Endothelial cell of umbilical vein (primary cell): ENCODE measurements at regions of chr14 and their contacts with region 1.

Region 1: DNA sequence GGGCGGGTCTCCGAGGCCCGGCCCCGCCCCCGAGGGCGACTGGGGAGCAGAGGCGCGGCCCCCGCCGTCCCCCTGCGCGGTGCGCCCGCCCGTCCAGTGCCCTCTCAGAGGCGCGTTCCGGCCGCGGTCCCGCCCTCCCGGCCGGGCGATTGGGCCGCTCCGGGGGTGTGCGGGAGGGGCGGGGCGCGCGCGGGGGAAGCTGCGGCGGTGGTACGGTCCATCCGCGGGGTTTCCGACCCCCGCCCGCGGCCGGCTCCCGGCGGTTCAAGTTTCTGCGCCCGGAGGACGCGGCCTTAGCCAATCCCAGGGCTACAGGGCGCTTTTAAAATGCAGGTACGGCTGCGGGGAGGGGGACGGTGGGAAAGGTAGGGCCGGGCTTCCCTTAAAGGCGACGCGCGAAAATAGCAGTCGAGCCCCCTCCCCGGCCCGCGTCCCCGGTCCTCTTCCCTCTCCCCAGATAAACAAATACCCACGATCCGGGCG is 317 bp upstream of the CCDC85C start:
- DNase-seq: peak; percentile 92
- H3K4me3 ChIP-seq: peak overlapping the region; percentile 45 to 81 (median 78)
- H3K27ac ChIP-seq: peak overlapping the region; percentile 60
- H3K4me1 ChIP-seq: peaks cover 20% of the 10 kb centered on the region
- H3K27me3 ChIP-seq: peaks cover 0 to 5% of the 10 kb centered on the region in 2 experiments
- CTCF ChIP-seq: no peak
- POLR2A ChIP-seq: peak; percentile 48

Region 2: DNA sequence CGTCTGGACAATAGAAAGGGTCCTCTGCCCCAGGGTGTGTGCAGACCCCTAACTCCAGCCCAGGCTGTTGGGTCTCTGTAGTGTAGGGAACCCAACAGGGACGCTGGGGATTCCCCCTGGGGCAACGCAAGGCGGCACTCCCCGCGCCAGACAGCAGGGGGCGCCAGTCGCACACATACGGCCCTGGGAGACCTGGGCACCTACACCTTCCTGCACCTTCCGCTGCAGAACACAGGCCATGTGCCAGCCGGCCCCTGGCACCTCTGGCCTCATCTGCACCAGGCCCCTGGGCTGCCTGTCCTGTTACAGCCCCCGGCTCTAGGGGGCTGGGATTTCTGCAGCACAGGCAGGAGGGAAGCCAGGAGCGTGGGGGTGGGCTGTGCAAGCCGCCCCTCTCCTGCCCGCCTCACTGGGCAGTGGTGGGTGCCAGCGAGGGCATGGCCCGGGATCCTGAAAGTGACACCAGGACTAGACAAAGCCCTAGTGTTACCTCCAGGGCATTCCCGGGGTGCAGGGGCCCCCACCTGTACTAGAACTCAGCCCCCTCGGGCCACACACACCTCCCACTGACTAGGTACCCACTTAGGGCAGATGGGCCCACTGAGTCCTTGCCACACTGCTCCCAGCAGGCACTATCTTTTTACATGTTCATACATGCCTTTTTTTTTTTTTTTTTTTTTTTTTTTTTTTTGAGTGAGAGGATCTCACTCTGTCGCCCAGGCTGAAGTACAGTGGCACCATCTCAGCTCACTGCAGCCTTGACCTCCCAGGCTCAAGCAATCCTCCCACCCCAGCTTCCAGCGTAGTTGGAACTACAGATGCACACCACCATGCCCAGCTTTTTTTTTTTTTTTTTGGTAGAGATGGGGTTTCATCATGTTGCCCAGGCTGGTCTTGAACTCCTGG is 85.6 kb before region 1 on chr14:
- CTCF ChIA-PET with region 1: interaction called, 24 read pairs
- POLR2A ChIA-PET with region 1: no interaction called
- dilution Hi-C with region 1: no loop called
- intact Hi-C with region 1: loop called (anchors 1 kb)
- DNase-seq: peak; percentile 55
- H3K4me3 ChIP-seq: no peak overlapping the region
- H3K27ac ChIP-seq: no peak overlapping the region
- H3K4me1 ChIP-seq: peaks cover 9% of the 10 kb centered on the region
- H3K27me3 ChIP-seq: no peaks in the 10 kb centered on the region
- CTCF ChIP-seq: peak; percentile 94 to 97
- POLR2A ChIP-seq: no peak

Region 3: DNA sequence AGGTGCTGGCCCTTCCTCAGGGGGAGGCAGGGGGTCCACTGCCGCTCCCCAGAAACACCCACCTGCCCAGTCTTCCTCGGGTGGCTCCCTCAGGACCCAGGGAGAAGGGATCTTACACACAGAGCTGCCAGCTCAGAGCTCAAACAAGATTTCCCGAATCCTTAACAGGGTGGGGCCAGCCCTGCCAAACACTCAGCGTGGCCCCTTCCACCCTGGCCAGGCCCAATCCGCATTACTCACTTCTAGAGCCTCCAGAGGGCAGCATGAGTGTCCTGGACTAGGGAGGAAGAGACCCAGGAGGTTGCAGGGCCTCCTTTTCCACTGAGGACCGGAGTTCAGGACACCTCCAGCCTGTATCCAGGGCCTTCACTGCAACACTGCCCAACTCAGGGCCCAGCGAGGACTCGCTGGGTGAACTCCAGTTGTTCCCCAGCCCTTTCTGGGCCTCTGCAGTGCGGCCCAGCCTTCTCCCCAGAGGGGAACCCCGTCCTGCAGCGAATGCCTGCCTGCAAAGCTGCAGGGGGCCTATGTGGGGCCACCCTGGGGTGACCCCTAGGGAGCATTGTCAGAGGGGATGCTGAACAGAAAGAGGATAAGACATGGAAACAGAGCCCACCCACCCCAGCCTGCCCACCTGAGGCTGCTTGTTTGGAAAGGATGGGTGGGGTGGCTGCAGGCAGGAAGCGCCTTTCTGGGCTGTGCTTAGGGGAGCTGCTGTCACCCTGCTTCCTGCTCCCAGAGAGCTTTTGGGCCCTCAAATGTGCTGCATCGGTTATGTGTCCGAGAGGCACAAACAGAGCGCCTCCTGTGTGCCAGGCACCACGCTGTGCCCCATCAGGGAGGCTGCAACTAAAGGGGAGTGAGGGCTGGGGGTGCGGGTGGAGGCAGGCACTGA is 79.3 kb before region 1 on chr14:
- CTCF ChIA-PET with region 1: interaction called, 24 read pairs
- POLR2A ChIA-PET with region 1: no interaction called
- dilution Hi-C with region 1: no loop called
- intact Hi-C with region 1: no loop called
- DNase-seq: peak; percentile 24
- H3K4me3 ChIP-seq: no peak overlapping the region
- H3K27ac ChIP-seq: no peak overlapping the region
- H3K4me1 ChIP-seq: peaks cover 15% of the 10 kb centered on the region
- H3K27me3 ChIP-seq: no peaks in the 10 kb centered on the region
- CTCF ChIP-seq: peak in 1 of 2 donors; percentile 13
- POLR2A ChIP-seq: no peak

Region 4: DNA sequence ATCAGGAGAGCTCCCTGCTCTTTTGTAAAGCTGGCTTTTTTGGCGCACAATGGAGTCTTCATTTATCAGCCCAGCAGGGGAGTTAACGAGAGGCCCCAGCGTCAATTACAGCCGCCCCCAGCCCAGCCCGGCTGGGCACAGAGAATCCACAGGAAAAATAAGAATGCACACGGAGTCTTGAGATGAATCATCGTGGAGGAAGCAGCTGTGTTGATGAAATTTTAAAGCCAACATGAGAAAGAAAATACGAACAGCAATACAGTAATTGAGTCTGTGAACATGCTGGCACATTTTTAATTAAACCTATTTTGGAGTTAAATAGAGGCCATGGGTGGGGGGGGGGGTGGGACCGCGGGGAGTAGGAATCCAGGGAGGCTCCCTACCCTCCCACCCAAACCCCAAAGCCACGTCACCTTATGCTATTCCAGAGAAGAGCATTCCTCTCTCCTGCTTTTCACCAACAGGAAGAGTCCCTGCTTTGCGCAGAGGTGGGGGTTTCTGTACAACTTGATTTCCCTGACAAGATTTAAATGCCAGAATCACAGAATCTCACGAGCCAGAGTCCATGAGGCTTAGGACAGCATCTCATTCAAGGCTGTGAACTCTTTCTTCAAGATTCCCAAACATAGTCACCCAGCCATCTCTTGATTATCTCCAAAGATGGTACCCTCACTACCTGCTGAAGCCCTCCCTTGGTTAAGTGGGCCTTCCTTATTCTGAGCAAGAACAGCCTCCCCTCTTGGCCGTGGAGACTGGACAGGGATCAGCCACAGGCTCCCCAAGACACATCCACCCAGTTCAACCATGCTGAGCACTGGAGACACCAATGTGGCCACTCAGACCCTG is 72.8 kb before region 1 on chr14:
- CTCF ChIA-PET with region 1: interaction called, 4 read pairs
- POLR2A ChIA-PET with region 1: interaction called, 6 read pairs
- dilution Hi-C with region 1: no loop called
- intact Hi-C with region 1: loop called (anchors 1 kb)
- DNase-seq: peak; percentile 95
- H3K4me3 ChIP-seq: peak overlapping the region in 1 of 3 experiments; percentile 20
- H3K27ac ChIP-seq: peak overlapping the region; percentile 84
- H3K4me1 ChIP-seq: peaks cover 27% of the 10 kb centered on the region
- H3K27me3 ChIP-seq: no peaks in the 10 kb centered on the region
- CTCF ChIP-seq: no peak
- POLR2A ChIP-seq: peak; percentile 23

Region 5: GRCh38 chr14:99563233-99564129 is 40.8 kb before region 1 on chr14:
- CTCF ChIA-PET with region 1: interaction called, 13 read pairs
- POLR2A ChIA-PET with region 1: no interaction called
- dilution Hi-C with region 1: no loop called
- intact Hi-C with region 1: loop called (anchors 1 kb)
- DNase-seq: peak; percentile 77
- H3K4me3 ChIP-seq: no peak overlapping the region
- H3K27ac ChIP-seq: no peak overlapping the region
- H3K4me1 ChIP-seq: peaks cover 5% of the 10 kb centered on the region
- H3K27me3 ChIP-seq: no peaks in the 10 kb centered on the region
- CTCF ChIP-seq: peak; percentile 46 to 70
- POLR2A ChIP-seq: no peak

Region 6: DNA sequence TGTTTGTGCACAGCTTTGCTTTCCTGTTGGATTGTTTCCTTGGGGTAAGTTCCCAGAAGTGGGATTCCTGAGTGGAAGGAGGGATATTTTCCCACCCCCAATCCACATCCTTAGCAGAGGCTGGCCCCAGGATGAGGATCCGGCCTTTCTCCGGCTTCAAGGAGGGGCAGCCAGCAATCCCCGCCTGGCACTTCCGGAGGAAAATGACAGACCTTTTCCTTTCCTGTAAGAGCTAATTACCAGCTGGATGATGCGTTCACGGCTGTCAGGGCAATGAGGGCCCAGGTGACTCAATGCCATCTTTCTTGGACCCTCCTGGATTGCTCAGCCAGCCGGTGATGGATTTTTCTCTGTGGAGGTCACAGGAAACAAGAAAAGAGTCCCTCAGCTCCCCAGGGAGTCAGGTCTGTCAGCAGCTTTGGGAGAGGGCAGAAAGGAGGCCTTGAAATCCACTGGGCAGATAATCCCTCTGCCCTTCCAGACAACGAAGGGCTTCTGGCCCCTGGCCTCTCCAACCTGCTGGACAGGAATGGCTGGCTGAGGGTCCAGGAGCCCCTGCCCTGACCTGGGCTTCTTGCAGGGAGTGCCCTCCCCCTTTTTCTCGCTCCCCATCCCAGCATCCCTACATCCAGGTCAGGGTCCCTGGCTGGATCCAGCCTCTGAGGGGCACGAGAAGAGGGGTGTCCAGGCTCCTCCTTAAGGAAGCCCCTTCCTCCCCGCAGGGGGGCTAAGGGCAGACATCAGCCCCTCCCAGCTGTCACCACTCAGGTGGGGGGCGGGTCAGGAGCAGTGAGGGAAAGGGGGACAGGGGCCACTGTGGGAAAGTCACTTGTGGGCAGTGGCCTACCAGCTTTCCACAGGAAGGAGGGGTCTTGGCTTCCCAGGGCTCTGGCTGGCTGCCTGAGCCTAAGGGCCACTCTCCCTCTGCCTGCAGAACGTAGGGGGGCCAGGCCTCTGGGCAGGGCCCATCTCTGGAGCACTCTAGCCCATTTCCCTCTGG is 15.8 kb after region 1 on chr14:
- CTCF ChIA-PET with region 1: interaction called, 61 read pairs
- POLR2A ChIA-PET with region 1: interaction called, 3 read pairs
- dilution Hi-C with region 1: no loop called
- intact Hi-C with region 1: loop called (anchors 1 kb)
- DNase-seq: peak; percentile 89
- H3K4me3 ChIP-seq: peak overlapping the region in 1 of 3 experiments; percentile 2
- H3K27ac ChIP-seq: peak overlapping the region; percentile 95
- H3K4me1 ChIP-seq: peaks cover 40% of the 10 kb centered on the region
- H3K27me3 ChIP-seq: no peaks in the 10 kb centered on the region
- CTCF ChIP-seq: no peak
- POLR2A ChIP-seq: no peak